OCI-LY7 (cell line): ENCODE measurements at regions of chr6 and their contacts with region 1.

Region 1: GRCh38 chr6:188821-189655 is 103.2 kb upstream of the DUSP22 start:
- DNase-seq: peak; percentile 89
- H3K4me3 ChIP-seq: no peak overlapping the region
- H3K27ac ChIP-seq: peak overlapping the region; percentile 24
- H3K4me1 ChIP-seq: peaks cover 87% of the 10 kb centered on the region
- CTCF ChIP-seq: peak; percentile 98

Region 2: DNA sequence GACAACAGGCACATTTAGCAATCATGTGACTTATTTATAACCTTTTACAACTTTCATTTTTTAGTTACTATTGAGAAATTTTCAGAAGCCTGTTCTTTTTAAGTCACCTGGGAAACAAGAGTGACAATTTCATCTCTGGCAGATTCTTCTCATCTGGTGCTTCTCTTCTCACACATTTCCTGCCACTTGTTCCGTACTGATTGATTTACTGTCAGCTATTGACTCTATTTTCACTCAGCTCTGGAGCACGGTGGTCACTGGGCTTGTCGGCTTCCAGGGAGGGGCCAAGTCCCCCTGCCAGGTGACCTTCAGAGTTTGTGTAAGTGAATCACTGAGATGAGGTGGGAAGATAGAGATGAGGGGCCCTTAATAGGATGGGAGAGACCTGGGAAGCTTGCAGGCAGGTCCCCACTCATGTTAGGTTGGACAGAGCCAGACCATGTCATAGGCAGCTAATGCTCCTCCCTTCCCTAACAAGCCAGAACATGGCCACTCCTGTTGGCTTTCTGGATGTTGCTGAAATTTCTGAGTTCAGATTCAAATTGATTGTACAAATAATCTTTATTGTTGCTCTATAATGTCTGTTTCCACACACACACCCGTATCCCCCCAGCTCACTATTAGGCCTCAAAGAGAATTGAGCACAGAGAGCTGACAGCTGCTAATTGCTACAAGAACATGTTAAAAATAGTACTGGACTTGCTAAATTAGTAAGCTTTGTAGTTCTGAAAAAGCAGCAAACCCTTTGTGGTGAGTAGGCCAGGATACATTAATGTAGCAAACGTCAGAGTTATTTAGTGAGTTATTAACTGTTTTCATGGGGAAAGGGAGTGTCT is 116.6 kb after region 1 on chr6:
- CTCF ChIA-PET with region 1: interaction called, 16 read pairs
- POLR2A ChIA-PET with region 1: no interaction called
- intact Hi-C with region 1: no loop called
- DNase-seq: peak; percentile 74
- H3K4me3 ChIP-seq: peak overlapping the region; percentile 2
- H3K27ac ChIP-seq: peak overlapping the region; percentile 71
- H3K4me1 ChIP-seq: peaks cover 62% of the 10 kb centered on the region
- CTCF ChIP-seq: no peak

Region 3: GRCh38 chr6:313087-313486 is 124.0 kb after region 1 on chr6:
- CTCF ChIA-PET with region 1: interaction called, 4 read pairs
- POLR2A ChIA-PET with region 1: interaction called, 14 read pairs
- intact Hi-C with region 1: no loop called
- DNase-seq: peak; percentile 63
- H3K4me3 ChIP-seq: peak overlapping the region; percentile 28
- H3K27ac ChIP-seq: peak overlapping the region; percentile 57
- H3K4me1 ChIP-seq: peaks cover 89% of the 10 kb centered on the region
- CTCF ChIP-seq: no peak

Region 4: DNA sequence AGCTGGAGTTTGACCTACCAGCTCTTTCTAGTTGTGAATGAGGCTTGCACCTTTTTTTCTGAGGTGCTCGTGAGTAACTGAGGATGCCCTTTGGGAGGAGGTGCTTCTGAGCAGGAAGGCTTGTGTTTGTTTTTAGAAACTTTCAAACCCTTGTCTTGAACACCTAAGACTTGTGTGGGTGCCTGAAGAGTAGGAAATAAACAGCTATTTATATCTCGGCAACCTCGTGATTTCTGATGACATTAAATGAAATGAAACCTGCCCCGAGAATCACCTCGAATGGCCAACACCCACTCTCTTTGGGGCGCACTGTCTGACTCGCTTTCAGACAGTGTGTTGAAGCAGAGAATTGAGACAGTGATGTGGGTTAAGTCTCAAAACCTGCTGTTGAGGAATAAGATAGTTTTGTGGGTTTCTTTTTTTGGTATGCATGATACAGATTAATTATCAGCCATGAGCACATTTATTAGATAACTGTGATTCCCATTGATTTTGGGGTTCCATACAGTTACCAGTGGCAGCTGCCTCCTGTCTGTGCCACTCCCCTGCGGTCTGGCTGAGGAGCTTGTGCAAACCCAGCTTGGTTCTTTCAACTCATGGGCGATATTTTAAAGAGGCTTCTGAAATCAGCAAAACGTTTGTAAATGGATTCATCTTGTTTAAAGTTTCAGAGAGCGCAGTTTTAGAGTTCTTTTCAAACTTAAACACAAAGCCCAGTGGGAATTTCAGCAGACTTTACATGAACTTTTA is 210.9 kb after region 1 on chr6:
- CTCF ChIA-PET with region 1: no interaction called
- POLR2A ChIA-PET with region 1: interaction called, 7 read pairs
- intact Hi-C with region 1: loop called (anchors 2 kb)
- DNase-seq: peak; percentile 73
- H3K4me3 ChIP-seq: no peak overlapping the region
- H3K27ac ChIP-seq: peak overlapping the region; percentile 15
- H3K4me1 ChIP-seq: peaks cover 71% of the 10 kb centered on the region
- CTCF ChIP-seq: no peak

Region 5: GRCh38 chr6:815348-815738 is 626.3 kb after region 1 on chr6:
- CTCF ChIA-PET with region 1: no interaction called
- POLR2A ChIA-PET with region 1: no interaction called
- intact Hi-C with region 1: no loop called
- DNase-seq: no peak
- H3K4me3 ChIP-seq: no peak overlapping the region
- H3K27ac ChIP-seq: no peak overlapping the region
- H3K4me1 ChIP-seq: no peaks in the 10 kb centered on the region
- CTCF ChIP-seq: no peak